ENCODE measurements at regions of chr17 and their contacts with region 1.

Region 1: DNA sequence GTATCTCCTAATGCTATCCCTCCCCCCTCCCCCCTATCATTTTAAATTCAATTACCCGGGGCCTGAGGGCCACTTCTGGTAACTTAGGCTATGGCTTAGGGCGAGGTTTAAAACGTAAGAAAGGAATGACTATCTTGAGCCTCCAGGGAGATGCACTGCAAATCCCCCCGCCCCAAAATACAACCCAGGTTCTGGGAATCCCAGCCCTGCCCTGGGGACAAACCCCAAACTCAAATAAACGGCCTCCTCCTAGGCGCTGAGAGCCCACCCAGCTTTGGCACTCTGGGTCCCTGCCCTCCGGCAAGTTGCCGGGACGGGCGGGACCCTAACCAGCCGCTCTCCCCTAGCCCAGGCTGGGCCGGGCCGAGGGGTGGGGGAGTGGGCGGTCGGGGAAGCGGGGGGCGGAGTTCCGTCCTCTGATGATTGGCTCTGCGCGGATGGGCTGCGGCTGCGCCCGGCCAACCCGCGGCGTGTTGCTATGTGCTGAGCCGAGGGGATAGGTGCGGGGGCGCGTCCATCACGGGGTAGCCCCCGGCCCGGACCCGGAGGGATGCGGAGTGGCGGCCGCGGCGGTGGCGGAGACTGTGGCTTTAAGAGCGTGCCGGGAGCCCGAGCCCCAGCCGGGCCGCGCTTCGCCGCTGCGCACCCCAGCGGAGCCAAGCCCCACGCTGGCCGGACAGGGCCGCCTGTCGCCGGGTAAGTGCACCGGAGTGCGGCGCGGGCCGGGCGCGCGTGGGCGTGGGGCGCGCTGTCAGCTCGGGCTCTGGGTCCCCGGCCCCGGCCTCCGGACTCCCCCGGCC is at the start of gene YPEL2:
- DNase-seq: peak; percentile 68 to 94 (median 91)
- ATAC-seq: peak; percentile 85
- H3K4me3 ChIP-seq: peak within 1 kb of the TSS; percentile 49 to 86
- H3K4me3 Mint-ChIP-seq: peak within 1 kb of the TSS; percentile 94
- H3K27ac ChIP-seq: peak within 1 kb of the TSS; percentile 44 to 52
- H3K27ac Mint-ChIP-seq: peak within 1 kb of the TSS; percentile 94
- H3K4me1 ChIP-seq: peaks cover 64% of the 10 kb centered on the region
- H3K4me1 Mint-ChIP-seq: peaks cover 81% of the 10 kb centered on the region
- H3K27me3 ChIP-seq: no peaks in the 10 kb centered on the region
- H3K27me3 Mint-ChIP-seq: no peaks in the 10 kb centered on the region
- CTCF ChIP-seq: no peak
- total RNA-seq, gene YPEL2: 48.7 to 54.4 TPM

Region 2: DNA sequence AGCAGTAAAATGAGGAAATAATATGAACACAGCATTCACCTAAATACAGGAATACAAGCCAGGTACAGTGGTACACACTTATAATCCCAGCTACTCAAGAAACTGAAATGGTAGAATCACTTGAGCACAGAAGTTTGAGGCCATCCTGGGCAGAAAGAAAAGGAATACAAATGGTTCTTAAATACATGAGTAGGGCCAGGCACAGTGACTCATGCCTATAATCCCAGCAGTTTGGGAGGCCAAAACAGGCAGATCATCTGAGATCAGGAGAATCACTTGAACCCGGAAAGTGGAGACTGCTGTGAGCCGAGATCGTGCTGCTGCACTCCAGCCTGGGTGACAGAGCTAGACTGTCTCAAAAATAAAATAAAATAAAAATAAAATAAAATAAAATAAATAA is 144.5 kb before region 1 on chr17:
- CTCF ChIA-PET with region 1: no interaction called
- POLR2A ChIA-PET with region 1: no interaction called
- intact Hi-C with region 1: no loop called
- DNase-seq: no peak
- ATAC-seq: no peak
- H3K4me3 ChIP-seq: no peak overlapping the region
- H3K4me3 Mint-ChIP-seq: no peak overlapping the region
- H3K27ac ChIP-seq: no peak overlapping the region
- H3K27ac Mint-ChIP-seq: no peak overlapping the region
- H3K4me1 ChIP-seq: no peaks in the 10 kb centered on the region
- H3K4me1 Mint-ChIP-seq: no peaks in the 10 kb centered on the region
- H3K27me3 ChIP-seq: no peaks in the 10 kb centered on the region
- H3K27me3 Mint-ChIP-seq: no peaks in the 10 kb centered on the region
- CTCF ChIP-seq: no peak

Region 3: DNA sequence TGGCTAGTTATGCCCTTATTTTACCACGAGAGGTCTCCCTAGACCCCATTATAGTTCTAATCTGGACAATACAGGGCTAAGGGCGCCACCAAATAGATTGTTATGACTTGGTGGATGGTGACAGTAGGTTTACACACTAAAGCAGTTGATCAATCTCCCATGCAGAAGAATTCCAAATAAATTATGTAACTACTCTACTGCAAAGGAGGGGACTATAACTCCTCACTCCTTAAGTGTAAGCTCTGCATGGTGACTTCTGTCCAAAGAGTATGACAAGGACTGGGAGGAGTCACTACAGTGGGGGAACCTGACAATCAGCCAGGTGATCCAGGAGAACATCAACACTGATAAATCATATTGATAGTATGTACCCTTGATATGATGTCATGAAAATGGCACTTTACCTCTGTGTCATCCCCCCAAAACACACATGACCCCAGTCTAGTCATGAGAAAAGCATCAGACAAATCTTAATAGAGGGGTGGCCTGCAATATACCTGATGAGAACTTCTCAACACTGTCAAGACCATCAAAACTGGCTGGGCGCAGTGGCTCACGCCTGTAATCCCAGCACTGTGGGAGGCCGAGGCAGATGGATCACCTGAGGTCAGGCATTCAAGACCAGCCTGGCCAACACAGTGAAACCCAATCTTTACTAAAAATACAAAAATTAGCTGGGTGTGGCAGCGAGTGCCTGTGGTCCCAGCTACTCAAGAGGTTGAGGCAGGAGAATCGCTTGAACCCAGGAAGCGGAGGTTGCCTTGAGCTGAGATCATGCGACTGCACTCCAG is 20.0 kb before region 1 on chr17:
- CTCF ChIA-PET with region 1: interaction called, 94 read pairs
- POLR2A ChIA-PET with region 1: no interaction called
- intact Hi-C with region 1: loop called (anchors 1 to 2 kb)
- DNase-seq: peak in 6 of 9 experiments; percentile 16 to 77 (median 42)
- ATAC-seq: peak; percentile 99
- H3K4me3 ChIP-seq: no peak overlapping the region
- H3K4me3 Mint-ChIP-seq: no peak overlapping the region
- H3K27ac ChIP-seq: no peak overlapping the region
- H3K27ac Mint-ChIP-seq: no peak overlapping the region
- H3K4me1 ChIP-seq: no peaks in the 10 kb centered on the region
- H3K4me1 Mint-ChIP-seq: no peaks in the 10 kb centered on the region
- H3K27me3 ChIP-seq: no peaks in the 10 kb centered on the region
- H3K27me3 Mint-ChIP-seq: no peaks in the 10 kb centered on the region
- CTCF ChIP-seq: peak; percentile 76

Region 4: GRCh38 chr17:59378458-59379074 is 47.2 kb after region 1 on chr17:
- CTCF ChIA-PET with region 1: interaction called, 19 read pairs
- POLR2A ChIA-PET with region 1: no interaction called
- intact Hi-C with region 1: no loop called
- DNase-seq: no peak
- ATAC-seq: no peak
- H3K4me3 ChIP-seq: no peak overlapping the region
- H3K4me3 Mint-ChIP-seq: no peak overlapping the region
- H3K27ac ChIP-seq: no peak overlapping the region
- H3K27ac Mint-ChIP-seq: no peak overlapping the region
- H3K4me1 ChIP-seq: peaks cover 46% of the 10 kb centered on the region
- H3K4me1 Mint-ChIP-seq: peaks cover 61% of the 10 kb centered on the region
- H3K27me3 ChIP-seq: no peaks in the 10 kb centered on the region
- H3K27me3 Mint-ChIP-seq: no peaks in the 10 kb centered on the region
- CTCF ChIP-seq: no peak

Region 5: DNA sequence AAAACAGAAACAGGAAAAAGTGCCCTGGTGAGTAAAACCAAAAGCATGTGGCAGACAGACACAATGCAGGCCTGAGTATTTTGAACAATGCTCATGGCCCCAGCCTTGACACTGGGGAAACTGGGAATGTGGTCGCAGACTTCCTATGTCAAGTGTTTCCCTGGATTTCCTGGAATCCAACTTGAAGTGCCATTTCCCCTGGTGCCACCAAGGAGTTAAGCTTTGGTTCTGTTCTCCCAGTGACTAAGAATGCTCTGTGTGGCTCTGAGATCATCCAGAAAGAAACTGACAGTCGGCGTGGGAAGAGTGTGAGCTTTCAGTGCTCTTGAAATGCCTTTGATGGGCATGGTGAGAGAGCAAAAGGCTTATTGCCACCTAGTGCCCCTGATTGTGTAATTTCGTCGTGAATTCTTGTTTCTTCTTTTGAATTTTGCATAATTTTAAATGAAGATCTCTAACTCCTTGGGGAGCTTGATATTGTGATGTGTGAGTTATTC is 96.1 kb after region 1 on chr17:
- CTCF ChIA-PET with region 1: interaction called, 75 read pairs
- POLR2A ChIA-PET with region 1: interaction called, 5 read pairs
- intact Hi-C with region 1: loop called in 1 of 2 experiments (anchors 1 kb)
- DNase-seq: peak in 4 of 9 experiments; percentile 6 to 40 (median 22)
- ATAC-seq: no peak
- H3K4me3 ChIP-seq: no peak overlapping the region
- H3K4me3 Mint-ChIP-seq: no peak overlapping the region
- H3K27ac ChIP-seq: no peak overlapping the region
- H3K27ac Mint-ChIP-seq: no peak overlapping the region
- H3K4me1 ChIP-seq: peaks cover 6% of the 10 kb centered on the region
- H3K4me1 Mint-ChIP-seq: peaks cover 9% of the 10 kb centered on the region
- H3K27me3 ChIP-seq: no peaks in the 10 kb centered on the region
- H3K27me3 Mint-ChIP-seq: no peaks in the 10 kb centered on the region
- CTCF ChIP-seq: no peak

Region 6: DNA sequence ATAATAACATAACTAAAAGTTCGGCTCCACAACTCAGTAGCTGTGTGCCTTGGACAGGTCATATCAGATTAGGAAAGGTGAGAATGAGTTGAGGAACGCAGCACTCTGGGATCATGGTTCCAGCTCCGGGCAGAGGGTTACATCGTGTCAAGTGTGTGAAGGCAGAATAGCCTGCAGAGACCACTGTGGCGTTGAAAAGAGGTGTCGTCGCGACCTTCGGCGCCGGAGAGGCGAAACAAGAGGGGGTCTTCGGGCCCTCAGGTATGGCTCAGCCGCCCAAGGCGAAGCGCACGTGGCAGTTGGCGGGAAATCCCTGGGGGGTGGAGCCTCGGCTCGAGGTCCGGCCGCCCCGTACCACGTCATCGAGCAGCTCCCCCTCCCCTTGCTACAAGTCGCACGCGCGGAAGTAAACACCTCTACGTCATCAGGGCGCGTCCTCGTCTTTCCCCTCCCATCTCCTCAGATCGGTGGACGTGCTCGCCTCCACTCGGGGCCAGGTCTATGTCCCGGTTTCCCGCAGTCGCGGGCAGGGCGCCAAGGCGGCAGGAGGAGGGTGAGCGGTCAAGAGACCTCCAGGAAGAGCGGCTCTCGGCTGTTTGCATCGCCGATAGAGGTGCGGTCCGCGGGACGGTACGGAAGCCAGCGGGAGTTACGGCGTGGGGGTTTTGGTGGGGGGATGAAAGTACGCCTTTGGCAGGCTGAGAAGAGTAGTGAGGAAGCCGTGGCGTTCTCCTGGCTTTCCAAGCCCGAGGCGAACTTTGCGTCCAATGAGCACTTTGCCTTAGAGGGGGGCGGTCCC is 234.0 kb after region 1 on chr17 and contains the start of gene DHX40:
- CTCF ChIA-PET with region 1: interaction called, 3 read pairs
- POLR2A ChIA-PET with region 1: interaction called, 4 read pairs
- intact Hi-C with region 1: loop called in 1 of 2 experiments (anchors 5 kb)
- DNase-seq: peak; percentile 86 to 99 (median 95)
- ATAC-seq: peak; percentile 89
- H3K4me3 ChIP-seq: peak within 1 kb of the TSS; percentile 94 to 100
- H3K4me3 Mint-ChIP-seq: peak within 1 kb of the TSS; percentile 100
- H3K27ac ChIP-seq: peak within 1 kb of the TSS; percentile 89 to 97
- H3K27ac Mint-ChIP-seq: peak within 1 kb of the TSS; percentile 100
- H3K4me1 ChIP-seq: peaks cover 17% of the 10 kb centered on the region
- H3K4me1 Mint-ChIP-seq: peaks cover 23% of the 10 kb centered on the region
- H3K27me3 ChIP-seq: no peaks in the 10 kb centered on the region
- H3K27me3 Mint-ChIP-seq: no peaks in the 10 kb centered on the region
- CTCF ChIP-seq: no peak
- total RNA-seq, gene DHX40: 72.7 to 72.8 TPM

Region 7: DNA sequence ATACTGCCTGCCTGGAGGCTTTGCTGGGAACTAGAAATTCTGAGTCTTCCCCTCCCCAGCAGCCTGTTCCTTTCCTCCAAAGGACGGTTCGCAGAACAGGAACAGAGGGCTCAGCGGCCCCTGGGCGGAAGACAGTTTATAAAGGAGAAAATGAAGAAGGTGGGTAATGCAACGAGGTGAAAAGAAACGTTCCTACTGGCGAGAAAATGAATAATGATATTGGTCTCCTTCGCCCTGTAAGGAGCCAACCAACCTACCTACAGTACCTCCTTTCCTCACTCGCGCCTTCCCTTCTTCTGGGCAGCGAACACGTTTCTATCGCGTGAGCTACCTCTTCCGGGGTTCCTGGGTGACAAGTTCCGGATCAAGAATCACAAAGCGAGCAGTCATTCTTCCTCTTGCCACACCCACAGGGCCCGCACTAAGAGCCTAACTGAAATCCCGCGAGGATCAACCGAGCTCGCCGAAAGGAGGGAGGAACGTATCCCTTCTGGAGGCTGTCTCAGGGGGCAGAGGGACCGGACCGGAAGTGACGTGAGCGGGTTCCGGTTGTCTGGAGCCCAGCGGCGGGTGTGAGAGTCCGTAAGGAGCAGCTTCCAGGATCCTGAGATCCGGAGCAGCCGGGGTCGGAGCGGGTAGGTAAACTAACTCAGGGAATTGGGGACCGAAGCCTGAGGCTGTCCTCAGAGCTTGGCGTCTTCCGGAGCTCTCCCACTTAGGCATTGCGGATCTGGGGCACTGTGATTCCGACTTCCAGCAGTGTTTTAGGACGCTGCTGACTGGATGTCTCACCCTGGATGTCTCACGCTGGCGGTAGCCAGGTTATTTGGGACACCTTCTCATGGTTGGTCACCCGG is 376.0 kb after region 1 on chr17 and contains the starts of genes PTRH2 and VMP1:
- CTCF ChIA-PET with region 1: no interaction called
- POLR2A ChIA-PET with region 1: no interaction called
- intact Hi-C with region 1: no loop called
- DNase-seq: peak; percentile 72 to 97 (median 87)
- ATAC-seq: peak; percentile 93
- H3K4me3 ChIP-seq: peak within 1 kb of the TSS; percentile 72 to 80
- H3K4me3 Mint-ChIP-seq: peak within 1 kb of the TSS; percentile 95
- H3K27ac ChIP-seq: peak within 1 kb of the TSS; percentile 80 to 94
- H3K27ac Mint-ChIP-seq: peak within 1 kb of the TSS; percentile 97
- H3K4me1 ChIP-seq: peaks cover 36% of the 10 kb centered on the region
- H3K4me1 Mint-ChIP-seq: peaks cover 63% of the 10 kb centered on the region
- H3K27me3 ChIP-seq: no peaks in the 10 kb centered on the region
- H3K27me3 Mint-ChIP-seq: no peaks in the 10 kb centered on the region
- CTCF ChIP-seq: no peak
- total RNA-seq, gene PTRH2: 6.1 to 7.6 TPM
- total RNA-seq, gene VMP1: 56.8 to 66.2 TPM

Region 8: DNA sequence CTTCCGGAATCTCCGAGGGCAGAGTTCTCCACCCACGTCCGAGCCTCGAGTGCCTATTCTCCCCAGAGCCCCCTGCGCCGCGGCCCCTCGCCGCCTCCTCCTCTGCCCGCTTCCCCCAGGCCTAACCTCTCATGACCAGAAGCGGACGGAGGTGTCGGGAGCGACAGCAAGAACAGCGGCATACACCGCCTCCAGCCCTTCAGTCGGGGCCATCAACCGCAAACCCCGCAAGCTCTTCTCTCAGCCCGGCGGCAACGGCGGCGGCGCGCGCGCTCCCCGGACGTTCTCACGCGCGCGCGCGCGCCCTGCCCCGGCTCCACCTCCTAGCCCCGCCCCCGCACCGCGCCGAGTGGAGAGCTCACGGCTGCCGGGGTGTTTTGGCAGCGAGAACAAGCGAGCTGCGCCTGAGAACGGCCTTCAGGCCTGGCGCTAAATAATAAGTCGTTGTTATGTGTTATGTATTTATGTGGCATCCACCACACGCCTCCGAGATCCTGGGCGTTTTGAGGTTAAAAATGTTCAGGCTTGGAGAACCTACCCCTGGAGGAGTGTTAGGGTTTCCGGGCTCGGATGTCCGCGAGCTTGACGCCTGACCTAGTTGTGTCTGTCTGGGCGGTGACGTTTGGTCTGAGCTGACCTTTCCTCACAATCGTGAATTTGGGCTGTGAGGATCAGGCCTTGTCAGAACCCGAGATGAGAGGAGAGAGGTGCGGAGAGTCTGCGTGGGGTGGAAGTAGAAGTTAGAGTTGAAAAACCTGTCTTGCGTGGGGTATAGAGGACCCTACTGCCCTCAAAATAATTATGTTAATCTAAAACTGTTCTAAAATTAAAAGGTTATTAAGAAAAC is 633.4 kb after region 1 on chr17 and contains the start of gene RNFT1:
- CTCF ChIA-PET with region 1: no interaction called
- POLR2A ChIA-PET with region 1: no interaction called
- intact Hi-C with region 1: loop called in 1 of 2 experiments (anchors 10 kb)
- DNase-seq: peak; percentile 82 to 95 (median 91)
- ATAC-seq: peak; percentile 86
- H3K4me3 ChIP-seq: peak within 1 kb of the TSS; percentile 89 to 100
- H3K4me3 Mint-ChIP-seq: peak within 1 kb of the TSS; percentile 95
- H3K27ac ChIP-seq: peak within 1 kb of the TSS; percentile 84 to 93
- H3K27ac Mint-ChIP-seq: peak within 1 kb of the TSS; percentile 97
- H3K4me1 ChIP-seq: peaks cover 22% of the 10 kb centered on the region
- H3K4me1 Mint-ChIP-seq: peaks cover 24% of the 10 kb centered on the region
- H3K27me3 ChIP-seq: no peaks in the 10 kb centered on the region
- H3K27me3 Mint-ChIP-seq: no peaks in the 10 kb centered on the region
- CTCF ChIP-seq: no peak
- total RNA-seq, gene RNFT1: 21.2 to 26.6 TPM